Activated B cell treated with CpG ODN at 0.5 μM for 24 hours (primary cell): ENCODE measurements at regions of chr20 and their contacts with region 1.

Region 1: GRCh38 chr20:33791959-33792597 is 19.1 kb upstream of the CHMP4B start:
- DNase-seq: peak; percentile 55
- ATAC-seq: peak; percentile 90
- H3K4me3 Mint-ChIP-seq: no peak overlapping the region
- H3K27ac Mint-ChIP-seq: peak overlapping the region; percentile 35
- H3K4me1 Mint-ChIP-seq: peaks cover 16% of the 10 kb centered on the region
- H3K27me3 Mint-ChIP-seq: no peaks in the 10 kb centered on the region
- CTCF ChIP-seq: peak; percentile 56

Region 2: GRCh38 chr20:33709398-33709797 is 82.7 kb before region 1 on chr20:
- CTCF ChIA-PET with region 1: no interaction called
- POLR2A ChIA-PET with region 1: no interaction called
- intact Hi-C with region 1: no loop called
- DNase-seq: no peak
- ATAC-seq: no peak
- H3K4me3 Mint-ChIP-seq: no peak overlapping the region
- H3K27ac Mint-ChIP-seq: no peak overlapping the region
- H3K4me1 Mint-ChIP-seq: peaks cover 2% of the 10 kb centered on the region
- H3K27me3 Mint-ChIP-seq: no peaks in the 10 kb centered on the region
- CTCF ChIP-seq: no peak

Region 3: GRCh38 chr20:33915726-33916331 is 123.8 kb after region 1 on chr20:
- CTCF ChIA-PET with region 1: interaction called, 4 read pairs
- POLR2A ChIA-PET with region 1: no interaction called
- intact Hi-C with region 1: loop called (anchors 1 kb)
- DNase-seq: peak; percentile 38
- ATAC-seq: peak; percentile 52
- H3K4me3 Mint-ChIP-seq: no peak overlapping the region
- H3K27ac Mint-ChIP-seq: no peak overlapping the region
- H3K4me1 Mint-ChIP-seq: peaks cover 15% of the 10 kb centered on the region
- H3K27me3 Mint-ChIP-seq: no peaks in the 10 kb centered on the region
- CTCF ChIP-seq: no peak